Activated B cell treated with CpG ODN at 0.5 μM for 24 hours (primary cell): ENCODE measurements at regions of chr9 and their contacts with region 1.

Region 1: GRCh38 chr9:34665381-34666250 is 3.2 kb upstream of the CCL27 start:
- DNase-seq: peak; percentile 75
- ATAC-seq: peak; percentile 90
- H3K4me3 Mint-ChIP-seq: peak overlapping the region; percentile 88
- H3K27ac Mint-ChIP-seq: peak overlapping the region; percentile 87
- H3K4me1 Mint-ChIP-seq: peaks cover 11% of the 10 kb centered on the region
- H3K27me3 Mint-ChIP-seq: no peaks in the 10 kb centered on the region
- CTCF ChIP-seq: no peak

Region 2: GRCh38 chr9:34522971-34523797 is 142.4 kb before region 1 on chr9 and contains the start of gene ENHO:
- CTCF ChIA-PET with region 1: no interaction called
- POLR2A ChIA-PET with region 1: no interaction called
- intact Hi-C with region 1: loop called (anchors 1 kb)
- DNase-seq: peak; percentile 93
- ATAC-seq: peak; percentile 98
- H3K4me3 Mint-ChIP-seq: peak within 1 kb of the TSS; percentile 66
- H3K27ac Mint-ChIP-seq: no peak within 1 kb of the TSS
- H3K4me1 Mint-ChIP-seq: peaks cover 9% of the 10 kb centered on the region
- H3K27me3 Mint-ChIP-seq: peaks cover 19% of the 10 kb centered on the region
- CTCF ChIP-seq: no peak
- total RNA-seq, gene ENHO: not detected in 2 replicates

Region 3: GRCh38 chr9:34620061-34620994 is 45.3 kb before region 1 on chr9 and contains the start of gene DCTN3:
- CTCF ChIA-PET with region 1: no interaction called
- POLR2A ChIA-PET with region 1: interaction called, 5 read pairs
- intact Hi-C with region 1: loop called (anchors 2 kb)
- DNase-seq: peak; percentile 69
- ATAC-seq: peak; percentile 98
- H3K4me3 Mint-ChIP-seq: peak within 1 kb of the TSS; percentile 95
- H3K27ac Mint-ChIP-seq: peak within 1 kb of the TSS; percentile 73
- H3K4me1 Mint-ChIP-seq: peaks cover 29% of the 10 kb centered on the region
- H3K27me3 Mint-ChIP-seq: peaks cover 30% of the 10 kb centered on the region
- CTCF ChIP-seq: no peak
- total RNA-seq, gene DCTN3: 63.9 and 64.3 TPM in 2 replicates

Region 4: DNA sequence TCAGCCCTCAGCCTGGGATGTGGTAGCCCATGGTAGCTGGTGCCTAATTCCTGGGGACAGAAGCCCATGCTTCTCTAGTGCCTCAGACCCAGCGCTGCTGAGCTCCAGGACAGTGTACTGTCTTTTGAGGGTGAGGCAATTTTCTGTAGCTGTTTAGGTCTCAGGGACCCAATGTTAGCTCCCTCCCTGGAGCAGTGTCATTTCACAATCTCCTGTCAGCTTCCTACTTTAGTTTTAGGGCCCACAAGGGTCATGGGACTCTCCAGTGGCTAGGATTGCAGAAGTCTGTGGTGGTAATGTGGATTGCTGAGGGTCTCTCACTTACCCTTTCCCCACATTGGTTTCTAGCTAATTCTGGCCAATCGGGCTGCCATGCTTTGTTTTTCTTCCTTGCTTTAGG is 112.0 kb after region 1 on chr9:
- CTCF ChIA-PET with region 1: no interaction called
- POLR2A ChIA-PET with region 1: no interaction called
- intact Hi-C with region 1: no loop called
- DNase-seq: no peak
- ATAC-seq: no peak
- H3K4me3 Mint-ChIP-seq: no peak overlapping the region
- H3K27ac Mint-ChIP-seq: no peak overlapping the region
- H3K4me1 Mint-ChIP-seq: no peaks in the 10 kb centered on the region
- H3K27me3 Mint-ChIP-seq: peaks cover 36% of the 10 kb centered on the region
- CTCF ChIP-seq: no peak

Region 5: DNA sequence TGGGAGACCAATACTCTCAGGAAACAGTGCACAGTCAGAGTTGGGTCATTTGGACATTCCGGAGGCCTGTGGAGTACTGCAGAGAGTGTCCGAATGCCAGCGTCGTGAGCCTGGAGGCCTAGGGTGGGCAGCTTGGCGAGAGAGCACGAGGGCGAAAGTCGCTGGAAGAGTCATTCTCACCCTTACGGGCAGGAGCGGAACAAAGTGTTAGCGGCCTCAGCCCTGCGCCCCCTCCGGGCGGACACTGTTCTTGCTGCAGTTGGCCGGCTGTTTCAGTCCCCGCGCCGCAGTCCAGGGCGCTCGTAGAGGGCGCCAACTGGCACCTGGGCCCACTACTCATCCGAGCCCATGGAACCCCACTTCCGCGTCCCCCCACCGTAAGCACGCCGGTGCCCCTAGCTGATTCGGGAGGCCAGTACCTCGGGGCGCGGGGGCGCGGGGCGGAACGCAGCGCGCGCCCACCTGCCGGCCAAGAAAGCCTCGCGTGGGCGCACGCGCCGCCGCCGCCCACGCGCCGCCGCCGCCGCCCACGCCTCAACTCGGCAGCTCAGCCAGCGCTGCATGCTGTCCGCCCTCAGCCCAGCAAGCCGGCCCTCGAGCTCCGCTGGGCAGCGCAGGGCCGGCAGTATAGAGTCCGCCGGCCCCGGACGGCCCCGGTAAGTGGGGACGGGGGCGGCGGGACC is 144.0 kb after region 1 on chr9:
- CTCF ChIA-PET with region 1: no interaction called
- POLR2A ChIA-PET with region 1: no interaction called
- intact Hi-C with region 1: no loop called
- DNase-seq: no peak
- ATAC-seq: no peak
- H3K4me3 Mint-ChIP-seq: no peak overlapping the region
- H3K27ac Mint-ChIP-seq: no peak overlapping the region
- H3K4me1 Mint-ChIP-seq: no peaks in the 10 kb centered on the region
- H3K27me3 Mint-ChIP-seq: peaks cover 47% of the 10 kb centered on the region
- CTCF ChIP-seq: no peak

Region 6: DNA sequence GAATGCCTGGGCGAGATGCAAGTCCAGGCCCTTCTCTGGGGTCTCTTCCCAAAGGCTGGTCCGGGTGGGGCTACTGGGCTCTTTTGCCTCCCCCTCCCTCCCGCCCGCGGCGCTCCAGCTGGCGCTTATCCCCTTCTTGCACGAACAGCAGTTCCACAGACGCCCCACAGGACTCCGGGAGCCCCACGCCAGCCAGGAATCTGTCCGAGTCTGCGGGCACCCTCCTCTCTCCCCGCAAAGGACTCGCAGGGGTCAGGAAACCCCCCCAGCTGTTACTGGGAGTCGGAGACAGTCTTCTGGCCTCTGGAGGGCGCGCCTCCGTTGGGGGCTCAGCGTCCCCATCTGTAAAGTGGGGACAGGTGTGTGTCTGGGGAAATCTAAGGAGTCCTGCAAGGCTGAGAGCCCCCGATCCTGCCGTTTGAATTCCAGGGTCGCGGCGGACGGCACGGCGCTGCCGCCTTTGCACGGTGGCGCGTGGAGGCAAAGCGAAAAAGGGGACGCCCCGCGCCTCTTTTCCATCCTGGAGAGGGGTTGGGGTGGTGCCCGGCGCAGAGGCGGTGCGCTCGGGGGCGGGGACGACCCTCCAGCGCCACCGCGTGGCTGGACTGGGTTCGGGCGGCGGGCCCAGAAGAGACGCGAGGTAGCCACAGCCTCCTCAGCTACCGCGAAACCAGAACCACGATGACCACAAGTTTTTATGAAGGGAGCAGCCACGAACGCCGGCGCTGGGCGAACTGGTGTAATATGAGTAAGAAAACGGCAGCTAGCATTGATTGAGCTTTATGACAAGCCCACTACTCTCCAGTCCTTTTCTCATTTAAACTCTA is 1500.7 kb after region 1 on chr9:
- CTCF ChIA-PET with region 1: no interaction called
- POLR2A ChIA-PET with region 1: no interaction called
- intact Hi-C with region 1: no loop called
- DNase-seq: peak; percentile 89
- ATAC-seq: peak; percentile 99
- H3K4me3 Mint-ChIP-seq: peak overlapping the region; percentile 79
- H3K27ac Mint-ChIP-seq: no peak overlapping the region
- H3K4me1 Mint-ChIP-seq: peaks cover 7% of the 10 kb centered on the region
- H3K27me3 Mint-ChIP-seq: peaks cover 1% of the 10 kb centered on the region
- CTCF ChIP-seq: peak; percentile 90